Activated CD4-positive, alpha-beta memory T cell treated with anti-CD3 and anti-CD28 coated beads for 36 hours (primary cell): ENCODE measurements at regions of chr11 and their contacts with region 1.

Region 1: DNA sequence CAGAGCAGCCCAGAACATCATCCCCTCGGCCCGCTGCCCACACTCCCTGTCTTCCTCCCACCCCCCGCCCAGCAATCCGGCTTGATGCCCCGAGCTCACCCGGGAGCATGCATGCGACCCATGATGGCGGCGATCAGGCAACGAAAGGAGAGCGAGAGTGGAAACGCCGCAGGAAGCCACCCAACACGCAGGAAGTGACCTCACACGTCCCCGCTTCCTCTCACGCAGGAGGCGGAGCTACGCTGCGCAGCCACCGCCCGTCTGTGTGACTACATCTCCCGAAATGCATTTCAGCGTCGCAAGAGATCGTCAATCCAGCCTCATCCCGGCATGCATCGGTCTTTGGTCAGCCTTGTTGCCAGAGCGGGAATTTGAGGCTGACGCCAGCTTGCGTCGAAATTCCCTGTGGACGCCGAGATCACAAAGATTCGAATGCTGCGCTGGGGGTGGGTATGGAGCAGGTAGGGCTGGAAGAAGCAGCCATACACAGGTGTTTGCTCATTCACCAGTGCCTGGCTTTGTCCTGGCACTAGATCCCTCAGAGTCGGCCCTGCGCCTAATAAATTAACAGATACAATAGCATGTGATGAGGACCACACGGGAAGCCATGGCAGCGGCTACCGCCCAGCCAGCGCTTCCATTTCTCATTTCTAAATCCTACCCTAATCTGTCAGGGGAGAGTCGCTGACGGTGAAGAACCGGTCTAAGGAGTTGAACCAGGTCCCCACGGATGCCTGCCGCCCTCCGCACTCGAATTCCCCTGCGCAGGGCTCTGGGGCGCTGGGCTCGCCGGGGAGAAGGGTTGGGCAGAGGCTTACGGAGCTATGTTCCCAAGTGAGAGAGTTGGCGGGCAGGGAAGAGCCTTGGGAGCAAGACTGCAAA is at the start of gene RPS13:
- DNase-seq: peak; percentile 97
- H3K4me3 Mint-ChIP-seq: peak within 1 kb of the TSS; percentile 96
- H3K27ac Mint-ChIP-seq: peak within 1 kb of the TSS; percentile 93
- H3K4me1 Mint-ChIP-seq: peaks cover 34% of the 10 kb centered on the region
- H3K27me3 Mint-ChIP-seq: no peaks in the 10 kb centered on the region
- total RNA-seq, gene RPS13: 1,729 to 1,745 TPM

Region 2: GRCh38 chr11:16902781-16903378 is 174.9 kb before region 1 on chr11:
- CTCF ChIA-PET with region 1: no interaction called
- POLR2A ChIA-PET with region 1: interaction called, 6 read pairs
- intact Hi-C with region 1: loop called (anchors 2 kb)
- DNase-seq: peak; percentile 29
- H3K4me3 Mint-ChIP-seq: peak overlapping the region; percentile 31
- H3K27ac Mint-ChIP-seq: peak overlapping the region; percentile 95
- H3K4me1 Mint-ChIP-seq: peaks cover 48% of the 10 kb centered on the region
- H3K27me3 Mint-ChIP-seq: no peaks in the 10 kb centered on the region

Region 3: DNA sequence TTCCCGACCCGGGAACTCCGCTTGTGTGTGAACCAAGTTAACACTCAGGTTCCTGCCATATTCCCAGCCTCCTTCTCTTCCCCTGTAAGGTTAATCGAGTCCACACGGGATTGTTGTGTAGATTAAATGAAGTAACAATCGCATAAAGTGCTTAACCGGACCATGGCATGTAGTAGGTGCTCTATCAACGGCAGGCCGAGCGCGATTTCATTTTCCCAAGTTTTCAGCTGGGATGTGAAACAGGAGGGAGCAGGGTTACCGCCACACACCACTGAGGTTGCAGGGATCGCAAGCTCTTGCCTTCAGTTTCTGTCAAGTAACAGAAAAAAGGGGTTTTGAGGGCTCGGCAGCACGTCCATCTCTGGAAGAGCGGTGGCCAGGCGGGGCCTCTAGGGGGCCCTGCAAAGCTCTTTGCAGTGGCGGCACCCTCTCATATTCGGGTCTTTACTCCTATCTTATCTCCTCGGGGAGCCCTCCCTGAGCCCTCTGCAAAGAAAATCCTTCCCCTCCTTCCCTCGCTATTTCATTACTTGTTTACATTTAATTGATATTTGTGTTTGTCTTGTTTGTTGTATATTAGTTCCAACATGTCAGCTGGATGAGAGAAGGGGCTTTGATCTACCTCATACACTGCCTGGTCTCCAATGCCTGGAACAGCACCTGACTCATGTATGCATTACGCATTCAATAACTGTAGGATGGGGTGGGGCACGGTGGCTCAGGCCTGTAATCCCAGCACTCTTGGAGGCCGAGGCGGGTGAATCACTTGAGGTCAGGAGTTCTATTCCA is 62.7 kb before region 1 on chr11:
- CTCF ChIA-PET with region 1: no interaction called
- POLR2A ChIA-PET with region 1: no interaction called
- intact Hi-C with region 1: loop called (anchors 5 kb)
- DNase-seq: peak; percentile 38
- H3K4me3 Mint-ChIP-seq: peak overlapping the region; percentile 77
- H3K27ac Mint-ChIP-seq: no peak overlapping the region
- H3K4me1 Mint-ChIP-seq: peaks cover 3% of the 10 kb centered on the region
- H3K27me3 Mint-ChIP-seq: peaks cover 11% of the 10 kb centered on the region

Region 4: GRCh38 chr11:17276236-17277023 is 198.7 kb after region 1 on chr11 and contains the start of gene NUCB2:
- CTCF ChIA-PET with region 1: interaction called, 3 read pairs
- POLR2A ChIA-PET with region 1: no interaction called
- intact Hi-C with region 1: loop called (anchors 10 kb)
- DNase-seq: peak; percentile 97
- H3K4me3 Mint-ChIP-seq: peak within 1 kb of the TSS; percentile 89
- H3K27ac Mint-ChIP-seq: peak within 1 kb of the TSS; percentile 87
- H3K4me1 Mint-ChIP-seq: peaks cover 32% of the 10 kb centered on the region
- H3K27me3 Mint-ChIP-seq: no peaks in the 10 kb centered on the region
- total RNA-seq, gene NUCB2: 38.1 to 38.2 TPM

Region 5: GRCh38 chr11:18012863-18013781 is 935.4 kb after region 1 on chr11 and contains the start of gene SERGEF:
- CTCF ChIA-PET with region 1: no interaction called
- POLR2A ChIA-PET with region 1: no interaction called
- intact Hi-C with region 1: loop called (anchors 10 kb)
- DNase-seq: peak; percentile 95
- H3K4me3 Mint-ChIP-seq: peak within 1 kb of the TSS; percentile 93
- H3K27ac Mint-ChIP-seq: peak within 1 kb of the TSS; percentile 88
- H3K4me1 Mint-ChIP-seq: peaks cover 40% of the 10 kb centered on the region
- H3K27me3 Mint-ChIP-seq: no peaks in the 10 kb centered on the region
- total RNA-seq, gene SERGEF: 42.7 to 44.2 TPM